Transverse colon (tissue), 4 donors: ENCODE measurements at regions of chr17 and their contacts with region 1.

Region 1: GRCh38 chr17:2282297-2282873 is 21.2 kb downstream of the SMG6 start:
- DNase-seq: no peak
- H3K4me3 ChIP-seq: no peak overlapping the region
- H3K27ac ChIP-seq: peak overlapping the region in 1 of 4 donors; percentile 52
- H3K4me1 ChIP-seq: no peaks in the 10 kb centered on the region
- H3K27me3 ChIP-seq: no peaks in the 10 kb centered on the region
- CTCF ChIP-seq: peak; percentile 61 to 73 (median 64)
- EP300 ChIP-seq: no peak
- POLR2A ChIP-seq: no peak

Region 2: GRCh38 chr17:1882836-1883235 is 399.5 kb before region 1 on chr17:
- in situ Hi-C with region 1: loop called in 1 of 4 experiments (anchors 25 kb)
- intact Hi-C with region 1: no loop called
- DNase-seq: no peak
- H3K4me3 ChIP-seq: no peak overlapping the region
- H3K27ac ChIP-seq: no peak overlapping the region
- H3K4me1 ChIP-seq: no peaks in the 10 kb centered on the region
- H3K27me3 ChIP-seq: no peaks in the 10 kb centered on the region
- CTCF ChIP-seq: peak; percentile 35 to 49 (median 44)
- EP300 ChIP-seq: no peak
- POLR2A ChIP-seq: no peak

Region 3: GRCh38 chr17:2054512-2055291 is 227.7 kb before region 1 on chr17 and contains the start of gene HIC1:
- in situ Hi-C with region 1: no loop called
- intact Hi-C with region 1: loop called (anchors 5 kb)
- DNase-seq: peak; percentile 77
- H3K4me3 ChIP-seq: peak within 1 kb of the TSS; percentile 24 to 65 (median 42)
- H3K27ac ChIP-seq: peak within 1 kb of the TSS; percentile 85 to 92 (median 90)
- H3K4me1 ChIP-seq: peaks cover 8 to 75% (median 67%) of the 10 kb centered on the region in 4 donors
- H3K27me3 ChIP-seq: peaks cover 76% of the 10 kb centered on the region
- CTCF ChIP-seq: peak; percentile 60 to 99 (median 93)
- EP300 ChIP-seq: no peak
- POLR2A ChIP-seq: peak; percentile 74
- total RNA-seq, gene HIC1: 9.1 to 32.5 (median 14.7) TPM

Region 4: GRCh38 chr17:2303204-2304188 is 21.1 kb after region 1 on chr17 and contains the starts of genes SMG6 and SRR:
- in situ Hi-C with region 1: no loop called
- intact Hi-C with region 1: no loop called
- DNase-seq: peak; percentile 95
- H3K4me3 ChIP-seq: peak within 1 kb of the TSS; percentile 64 to 93 (median 80)
- H3K27ac ChIP-seq: peak within 1 kb of the TSS; percentile 92 to 97 (median 95)
- H3K4me1 ChIP-seq: peaks cover 8 to 26% (median 15%) of the 10 kb centered on the region in 4 donors
- H3K27me3 ChIP-seq: no peaks in the 10 kb centered on the region
- CTCF ChIP-seq: no peak
- EP300 ChIP-seq: no peak
- POLR2A ChIP-seq: peak; percentile 82
- total RNA-seq, gene SMG6: 28.6 to 112 (median 39.1) TPM
- total RNA-seq, gene SRR: 0.40 to 23.1 (median 12.1) TPM in 3 of 4 donors, not detected in the other

Region 5: GRCh38 chr17:2911035-2911754 is 628.8 kb after region 1 on chr17:
- in situ Hi-C with region 1: no loop called
- intact Hi-C with region 1: no loop called
- DNase-seq: no peak
- H3K4me3 ChIP-seq: no peak overlapping the region
- H3K27ac ChIP-seq: no peak overlapping the region
- H3K4me1 ChIP-seq: no peaks in the 10 kb centered on the region
- H3K27me3 ChIP-seq: no peaks in the 10 kb centered on the region
- CTCF ChIP-seq: no peak
- EP300 ChIP-seq: no peak
- POLR2A ChIP-seq: no peak